Lower leg skin (tissue), 4 donors: ENCODE measurements at regions of chr11 and their contacts with region 1.

Region 1: DNA sequence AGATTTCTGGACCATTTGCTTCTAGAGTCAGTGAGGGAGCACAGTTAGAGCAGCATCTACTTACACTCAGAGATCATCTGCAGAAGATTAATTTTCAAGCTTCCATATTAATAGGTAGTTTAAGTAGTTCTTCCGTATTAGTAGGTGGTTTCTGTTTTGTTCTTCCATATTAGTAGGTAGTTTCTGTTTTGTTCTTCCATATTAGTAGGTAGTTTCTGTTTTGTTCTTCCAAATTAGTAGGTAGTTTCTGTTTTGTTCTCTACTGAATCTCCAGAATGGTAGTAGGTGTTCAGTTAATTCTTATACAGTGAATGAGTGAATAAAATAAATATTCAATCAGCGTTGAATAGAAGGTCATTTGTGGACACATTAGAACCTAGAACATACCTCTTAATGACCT is 175.7 kb downstream of the TMEM135 start:
- DNase-seq: no peak
- H3K4me3 ChIP-seq: no peak overlapping the region
- CTCF ChIP-seq: no peak
- POLR2A ChIP-seq: no peak

Region 2: DNA sequence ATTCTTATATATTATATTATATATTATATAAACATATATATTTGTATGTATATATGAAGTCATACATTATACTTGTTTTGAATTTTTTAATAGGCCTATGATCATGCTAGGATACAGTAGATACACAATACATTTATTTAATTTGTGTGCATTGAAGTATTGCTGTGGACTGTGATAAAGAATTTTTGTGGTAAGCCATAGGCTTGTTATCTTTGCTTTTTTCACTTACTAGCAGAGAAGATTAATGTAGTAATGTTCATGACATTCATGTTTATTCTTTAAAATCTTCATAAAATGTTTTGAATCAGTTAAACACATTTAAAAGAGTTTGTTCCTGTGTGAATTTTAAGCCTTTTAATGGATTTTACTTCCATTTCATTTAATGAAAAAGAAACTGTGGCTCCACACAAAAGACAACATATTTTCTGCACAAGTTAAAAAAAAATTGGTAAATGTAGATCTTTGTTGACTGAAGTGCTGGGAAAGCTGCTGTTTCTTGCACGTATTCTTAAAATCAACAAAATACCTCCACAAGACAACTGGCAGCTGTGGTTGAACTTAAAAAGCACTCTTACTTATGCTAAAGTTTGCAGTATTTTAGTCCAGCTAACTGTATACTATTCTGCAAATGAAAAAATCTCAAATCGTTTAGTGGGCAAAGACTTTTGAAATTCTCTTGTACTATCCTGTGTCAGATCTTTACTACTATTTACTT is 19.5 kb before region 1 on chr11:
- intact Hi-C with region 1: loop called (anchors 1 kb)
- DNase-seq: no peak
- H3K4me3 ChIP-seq: no peak overlapping the region
- CTCF ChIP-seq: no peak
- POLR2A ChIP-seq: no peak